ENCODE measurements at regions of chr10 and their contacts with region 1.

Region 1: DNA sequence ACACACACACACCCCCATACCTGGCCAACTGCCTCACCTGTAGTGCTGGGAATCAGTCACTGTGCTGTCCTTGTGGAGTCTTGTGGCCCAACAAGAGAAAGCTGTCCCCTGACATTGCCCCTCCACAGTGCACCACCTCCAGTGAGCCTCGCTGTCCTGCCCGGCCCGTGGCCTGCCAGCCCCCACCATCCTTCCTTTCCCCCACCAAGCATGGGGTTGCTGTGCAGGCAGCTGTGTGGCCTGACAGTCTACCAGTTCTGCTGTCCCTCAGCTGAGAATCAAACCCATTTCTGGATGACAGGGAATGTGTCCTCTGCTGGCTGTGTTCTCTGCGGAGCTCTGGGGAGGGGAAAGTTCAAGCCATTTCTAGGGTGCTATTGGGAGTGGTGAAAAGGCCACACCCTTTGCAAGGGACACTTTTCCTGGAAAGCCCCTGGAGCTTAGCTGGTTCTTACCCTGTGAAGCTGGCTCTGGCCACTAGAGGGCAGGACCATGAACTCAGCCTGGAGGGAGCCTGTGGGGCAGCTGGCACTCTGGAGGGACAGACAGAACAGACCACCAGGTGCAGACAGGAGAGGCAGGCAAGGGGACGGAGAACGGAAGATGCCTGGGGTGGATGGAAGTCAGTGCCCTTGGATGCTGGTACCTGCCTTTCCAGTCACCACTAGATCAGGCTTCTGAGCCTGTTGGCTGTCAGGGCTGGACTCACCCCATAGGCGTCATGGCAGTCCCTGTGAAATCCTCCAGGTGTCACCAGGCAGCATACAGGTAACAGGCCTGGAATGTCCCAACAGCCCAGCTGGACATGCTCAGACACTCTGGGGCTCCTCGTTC is 10.5 kb upstream of the MTPAP start:
- DNase-seq: peak; percentile 48
- H3K4me3 Mint-ChIP-seq: no peak overlapping the region
- H3K27ac Mint-ChIP-seq: no peak overlapping the region
- H3K4me1 Mint-ChIP-seq: peaks cover 8% of the 10 kb centered on the region
- H3K27me3 Mint-ChIP-seq: peaks cover 13% of the 10 kb centered on the region

Region 2: GRCh38 chr10:29712108-29712507 is 647.5 kb before region 1 on chr10:
- intact Hi-C with region 1: no loop called
- DNase-seq: no peak
- H3K4me3 Mint-ChIP-seq: no peak overlapping the region
- H3K27ac Mint-ChIP-seq: no peak overlapping the region
- H3K4me1 Mint-ChIP-seq: no peaks in the 10 kb centered on the region
- H3K27me3 Mint-ChIP-seq: no peaks in the 10 kb centered on the region

Region 3: GRCh38 chr10:30348378-30348776 is 11.2 kb before region 1 on chr10:
- intact Hi-C with region 1: loop called (anchors 1 kb)
- DNase-seq: no peak
- H3K4me3 Mint-ChIP-seq: peak overlapping the region; percentile 93
- H3K27ac Mint-ChIP-seq: peak overlapping the region; percentile 88
- H3K4me1 Mint-ChIP-seq: peaks cover 49% of the 10 kb centered on the region
- H3K27me3 Mint-ChIP-seq: no peaks in the 10 kb centered on the region

Region 4: GRCh38 chr10:30384701-30385201 is 25.2 kb after region 1 on chr10:
- intact Hi-C with region 1: loop called (anchors 1 kb)
- DNase-seq: no peak
- H3K4me3 Mint-ChIP-seq: no peak overlapping the region
- H3K27ac Mint-ChIP-seq: no peak overlapping the region
- H3K4me1 Mint-ChIP-seq: no peaks in the 10 kb centered on the region
- H3K27me3 Mint-ChIP-seq: peaks cover 28% of the 10 kb centered on the region

Measured in activated T-helper 1 cell treated with anti-CD3 and anti-CD28 coated beads, Interleukin-12 subunit alpha, Interleukin-12 subunit beta, Interleukin-2, Interleukin-4 antibody, amounts not matched to agents 30 ng/mL and 10 ng/mL and 1 ng/mL, durations not matched to agents 14 hours and 24 hours and 36 hours (primary cell).